HEK293 (cell line): ENCODE measurements at regions of chr12 and their contacts with region 1.

Region 1: DNA sequence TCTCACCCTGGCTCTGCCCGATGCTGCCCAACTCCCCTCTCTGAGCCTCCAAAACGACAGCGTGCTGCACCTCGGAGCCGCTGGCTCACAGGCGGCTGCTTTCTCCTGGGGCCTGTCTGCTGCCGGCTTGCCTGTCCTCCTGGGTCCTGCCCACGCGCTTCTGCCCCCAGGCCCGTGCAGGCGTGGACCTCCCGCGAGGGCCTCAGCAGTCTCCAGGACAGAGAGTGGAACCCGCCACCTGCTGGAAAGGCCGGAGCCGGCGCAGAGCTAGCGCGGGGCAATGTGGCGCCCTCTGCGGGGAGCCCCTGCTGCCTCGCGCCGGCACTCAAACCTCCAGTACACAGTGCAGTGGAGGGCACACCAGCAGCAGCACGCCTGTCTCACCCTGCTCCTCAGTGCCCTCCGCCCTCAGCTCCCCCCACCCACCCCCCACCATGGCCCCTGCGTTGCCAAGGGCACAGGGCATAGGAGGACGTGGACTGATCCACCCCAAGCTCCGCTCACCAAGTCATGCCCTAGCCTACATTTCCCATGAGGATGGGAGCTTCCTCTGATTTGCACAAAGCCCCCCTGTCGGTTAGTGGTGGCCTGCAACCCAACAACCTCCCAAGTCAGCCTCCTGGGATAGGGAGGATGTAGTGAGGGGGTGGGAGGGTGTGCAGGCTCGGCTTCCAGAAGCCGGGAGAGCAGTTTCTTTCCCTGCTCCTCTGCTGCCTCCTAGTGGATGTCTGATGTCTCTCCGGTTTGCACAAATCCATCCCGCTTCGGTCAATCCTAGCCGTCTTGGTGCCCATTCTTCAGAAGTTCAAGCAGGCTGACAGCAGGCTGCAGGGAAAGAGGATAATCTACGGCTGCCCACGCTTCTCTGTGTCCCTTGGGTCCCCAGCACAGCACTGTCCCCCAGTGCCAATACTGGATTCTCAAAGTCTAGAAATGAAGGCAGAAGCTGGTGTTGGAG is 25.2 kb downstream of the KRT8 start:
- H3K4me3 ChIP-seq: no peak overlapping the region
- H3K27ac ChIP-seq: peak overlapping the region; percentile 52; the same call in 1 of the 2 replicates
- H3K4me1 ChIP-seq: peaks cover under 1% of the 10 kb centered on the region
- CTCF ChIP-seq: peak; percentile 98

Region 2: GRCh38 chr12:52147367-52147972 is 732.2 kb before region 1 on chr12:
- CTCF ChIA-PET with region 1: interaction called, 88 read pairs
- POLR2A ChIA-PET with region 1: interaction called, 5 read pairs
- H3K4me3 ChIP-seq: no peak overlapping the region
- H3K27ac ChIP-seq: no peak overlapping the region
- H3K4me1 ChIP-seq: no peaks in the 10 kb centered on the region; the same call in 1 of the 2 replicates
- CTCF ChIP-seq: no peak

Region 3: DNA sequence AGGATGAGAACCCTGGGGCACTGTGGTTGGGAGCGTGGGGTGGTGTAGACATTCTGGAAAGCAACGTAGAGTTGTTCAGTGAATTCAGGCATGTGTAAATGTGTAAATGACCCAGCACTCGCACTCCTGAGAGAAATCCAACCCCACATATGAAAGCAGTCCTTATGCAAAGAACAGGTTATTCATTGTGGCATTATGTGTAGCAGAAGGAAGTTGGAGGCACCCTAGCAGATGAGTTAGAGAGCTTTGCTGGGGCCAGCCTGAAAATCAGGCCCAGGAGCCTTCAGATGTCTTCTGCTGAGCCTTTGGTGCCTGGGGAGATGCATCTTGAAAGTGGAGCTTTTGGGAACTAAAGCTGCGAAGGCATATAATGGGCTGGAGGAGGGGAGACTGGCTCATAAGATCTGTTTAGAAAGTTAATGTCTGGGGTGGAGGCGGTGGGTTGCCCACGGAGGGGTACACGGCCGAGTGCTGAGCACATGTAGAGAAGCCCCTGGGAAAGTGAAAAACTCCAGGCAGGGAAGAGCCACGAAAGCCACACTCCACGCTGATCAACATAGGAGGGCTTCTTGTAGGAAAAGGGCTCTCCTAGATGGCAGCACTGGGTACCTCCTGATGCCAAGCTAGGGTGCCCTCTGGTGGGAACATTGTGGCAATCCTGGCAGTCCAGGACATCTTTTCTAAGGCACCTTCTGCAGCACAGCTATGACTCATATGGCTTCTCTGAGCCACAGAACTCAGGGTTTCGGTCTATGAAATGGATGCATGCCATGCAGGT is 552.4 kb before region 1 on chr12:
- CTCF ChIA-PET with region 1: interaction called, 19 read pairs
- POLR2A ChIA-PET with region 1: no interaction called
- H3K4me3 ChIP-seq: no peak overlapping the region
- H3K27ac ChIP-seq: no peak overlapping the region
- H3K4me1 ChIP-seq: no peaks in the 10 kb centered on the region
- CTCF ChIP-seq: peak; percentile 97

Region 4: GRCh38 chr12:52372216-52373154 is 507.2 kb before region 1 on chr12:
- CTCF ChIA-PET with region 1: interaction called, 200 read pairs
- POLR2A ChIA-PET with region 1: interaction called, 3 read pairs
- H3K4me3 ChIP-seq: no peak overlapping the region
- H3K27ac ChIP-seq: no peak overlapping the region
- H3K4me1 ChIP-seq: no peaks in the 10 kb centered on the region
- CTCF ChIP-seq: peak; percentile 77

Region 5: DNA sequence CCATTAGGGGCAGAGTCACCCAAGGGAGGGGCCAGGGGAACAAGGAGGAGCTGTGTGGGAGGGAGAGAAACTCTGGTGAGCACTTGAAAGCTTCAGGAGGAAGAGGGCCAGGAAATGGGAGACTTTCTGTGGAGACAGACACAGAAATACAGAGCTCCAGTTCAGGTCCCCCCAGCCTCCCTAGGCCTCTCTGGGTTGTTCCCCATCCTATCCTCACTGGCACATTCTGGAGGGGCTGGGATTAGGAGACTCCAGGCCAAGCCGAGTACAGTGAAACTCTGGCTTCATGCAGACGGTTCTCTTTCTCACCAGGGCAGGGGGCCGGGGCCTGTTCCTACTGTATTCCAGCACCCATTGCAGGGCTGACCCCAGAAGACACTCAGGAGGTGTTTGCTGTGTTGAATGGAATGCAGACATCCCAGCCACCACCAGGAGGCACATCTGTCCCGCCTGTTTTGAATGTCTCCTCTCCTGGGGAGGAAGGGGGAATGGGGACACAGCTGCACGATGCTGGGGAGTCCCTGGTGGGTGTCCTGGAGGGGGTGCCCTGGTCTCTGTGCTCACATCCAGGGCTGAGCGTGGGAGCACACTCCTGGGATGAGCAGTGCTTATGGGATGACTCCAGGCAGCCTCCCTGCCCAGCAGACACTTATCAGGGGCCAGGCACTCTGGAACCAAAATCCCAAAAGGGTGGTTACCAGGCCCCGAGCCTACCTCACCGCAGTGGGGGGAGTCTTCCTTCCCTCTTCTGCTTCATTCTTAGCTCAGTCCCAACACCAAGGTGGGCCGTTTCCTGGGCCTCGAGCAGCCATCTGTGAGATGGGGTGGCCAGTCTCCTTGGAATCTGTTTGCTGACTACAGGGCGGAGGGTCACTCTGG is 488.7 kb before region 1 on chr12:
- CTCF ChIA-PET with region 1: interaction called, 20 read pairs
- POLR2A ChIA-PET with region 1: no interaction called
- H3K4me3 ChIP-seq: no peak overlapping the region
- H3K27ac ChIP-seq: no peak overlapping the region
- H3K4me1 ChIP-seq: no peaks in the 10 kb centered on the region
- CTCF ChIP-seq: peak; percentile 52

Region 6: DNA sequence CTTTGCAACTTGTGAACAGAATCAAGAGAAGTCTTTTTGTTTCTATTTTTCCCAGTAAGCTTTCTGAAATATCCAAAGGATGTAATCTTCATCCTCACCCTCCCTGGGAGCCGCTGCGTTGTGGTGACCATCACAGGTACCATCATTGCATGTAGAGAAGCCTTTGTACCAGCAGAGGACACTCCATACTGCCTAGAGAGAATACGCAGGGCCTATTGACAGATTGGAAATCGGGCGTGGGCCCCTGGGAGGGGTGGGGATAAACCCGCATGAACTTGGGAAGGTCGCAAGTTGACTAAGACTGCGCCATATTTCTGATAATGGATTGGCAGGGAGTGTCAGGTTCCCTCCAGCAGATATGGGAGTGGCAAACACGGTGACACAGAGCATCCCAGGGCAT is 212.2 kb before region 1 on chr12:
- CTCF ChIA-PET with region 1: interaction called, 16 read pairs
- POLR2A ChIA-PET with region 1: interaction called, 4 read pairs
- H3K4me3 ChIP-seq: no peak overlapping the region
- H3K27ac ChIP-seq: no peak overlapping the region
- H3K4me1 ChIP-seq: no peaks in the 10 kb centered on the region
- CTCF ChIP-seq: no peak

Region 7: GRCh38 chr12:52697058-52697582 is 182.6 kb before region 1 on chr12:
- CTCF ChIA-PET with region 1: no interaction called
- POLR2A ChIA-PET with region 1: no interaction called
- H3K4me3 ChIP-seq: no peak overlapping the region
- H3K27ac ChIP-seq: no peak overlapping the region
- H3K4me1 ChIP-seq: no peaks in the 10 kb centered on the region
- CTCF ChIP-seq: no peak

Region 8: GRCh38 chr12:52832451-52832850 is 47.2 kb before region 1 on chr12:
- CTCF ChIA-PET with region 1: no interaction called
- POLR2A ChIA-PET with region 1: no interaction called
- H3K4me3 ChIP-seq: no peak overlapping the region
- H3K27ac ChIP-seq: no peak overlapping the region
- H3K4me1 ChIP-seq: no peaks in the 10 kb centered on the region
- CTCF ChIP-seq: no peak

Region 9: DNA sequence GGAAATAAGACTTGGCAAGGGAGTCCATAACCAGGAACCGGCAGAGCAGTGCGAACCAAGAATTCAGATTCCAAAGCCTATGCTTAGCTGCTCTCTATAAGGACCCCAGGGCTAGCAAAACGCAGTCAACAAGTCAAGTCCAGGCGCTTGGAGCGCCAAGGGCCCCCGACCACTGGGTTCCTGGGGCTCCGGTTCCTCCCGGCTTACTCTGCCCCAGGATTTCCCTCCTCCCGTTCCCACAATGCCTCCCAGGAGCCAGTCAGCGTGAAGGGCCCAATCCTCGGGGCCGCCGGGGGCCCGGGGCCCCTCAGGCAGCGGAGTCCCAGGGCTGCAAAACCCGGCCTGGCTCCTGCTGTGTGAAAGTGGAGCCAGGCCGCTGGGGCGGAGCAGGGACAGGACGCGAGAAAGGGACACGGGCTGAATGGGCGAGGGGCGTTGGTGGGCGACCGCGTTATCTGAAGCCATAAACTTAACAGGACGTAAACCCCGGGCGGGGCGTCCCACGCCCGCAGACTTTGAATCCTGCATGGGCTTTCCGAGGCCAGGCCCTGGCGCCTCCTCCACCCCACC is 23.7 kb after region 1 on chr12:
- CTCF ChIA-PET with region 1: interaction called, 260 read pairs
- POLR2A ChIA-PET with region 1: interaction called, 32 read pairs
- H3K4me3 ChIP-seq: peak overlapping the region; percentile 68
- H3K27ac ChIP-seq: peak overlapping the region; percentile 54
- H3K4me1 ChIP-seq: peaks cover 18% of the 10 kb centered on the region
- CTCF ChIP-seq: no peak